Adrenal gland (tissue), 19 donors: ENCODE measurements at regions of chr7 and their contacts with region 1.

Region 1: GRCh38 chr7:120792091-120792860 is 65.7 kb downstream of the TSPAN12 start:
- DNase-seq: peak; percentile 71 to 88 (median 80)
- H3K4me3 ChIP-seq: no peak overlapping the region
- H3K27ac ChIP-seq: no peak overlapping the region
- H3K4me1 ChIP-seq: no peaks in the 10 kb centered on the region
- H3K27me3 ChIP-seq: no peaks in the 10 kb centered on the region
- CTCF ChIP-seq: peak; percentile 64 to 86 (median 74)
- POLR2A ChIP-seq: no peak

Region 2: GRCh38 chr7:120941064-120941463 is 148.8 kb after region 1 on chr7:
- intact Hi-C with region 1: loop called in 1 of 2 experiments (anchors 5 kb)
- DNase-seq: no peak
- H3K4me3 ChIP-seq: no peak overlapping the region
- H3K27ac ChIP-seq: no peak overlapping the region
- H3K4me1 ChIP-seq: peaks cover 0 to 8% of the 10 kb centered on the region in 2 donors
- H3K27me3 ChIP-seq: no peaks in the 10 kb centered on the region
- CTCF ChIP-seq: peak; percentile 4 to 59 (median 42)
- POLR2A ChIP-seq: no peak

Region 3: DNA sequence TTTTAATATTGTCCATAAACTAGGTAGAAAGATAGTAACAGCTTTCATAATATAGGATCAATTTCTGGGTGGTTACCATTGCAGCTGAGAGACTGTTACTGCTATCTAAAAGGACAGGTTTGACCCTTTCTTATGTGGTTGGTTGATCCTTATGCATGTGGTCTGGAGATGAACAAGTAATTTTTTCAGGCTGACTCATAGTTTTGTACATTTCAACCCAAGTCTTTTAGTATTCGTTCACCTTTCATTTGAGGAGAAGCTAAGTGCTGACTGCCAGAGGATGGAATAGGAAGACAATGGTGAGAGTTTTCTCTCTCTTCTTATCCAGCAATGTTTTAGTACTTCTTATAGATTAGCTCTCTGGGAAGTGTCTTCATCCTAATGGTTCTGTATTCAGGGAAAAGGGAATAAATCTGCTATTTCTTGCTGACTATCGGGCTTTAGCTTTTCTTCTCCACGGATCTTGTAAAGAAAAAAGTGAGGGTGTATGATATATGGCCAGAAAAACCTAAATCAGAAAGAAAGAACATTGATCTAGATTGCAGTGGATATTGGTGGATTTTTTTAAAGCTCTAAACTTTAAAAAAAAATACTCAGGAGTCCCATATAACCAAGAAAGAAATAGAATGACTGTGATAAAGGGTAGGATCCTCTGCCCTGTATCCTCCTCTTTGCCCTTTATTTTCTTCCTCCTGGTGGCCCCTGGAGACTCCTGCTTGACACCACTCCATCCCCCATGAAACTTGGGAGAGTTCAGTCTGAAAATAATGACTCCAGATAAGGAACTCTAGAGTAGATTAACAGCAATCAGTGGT is 284.3 kb after region 1 on chr7:
- intact Hi-C with region 1: no loop called
- DNase-seq: no peak
- H3K4me3 ChIP-seq: no peak overlapping the region
- H3K27ac ChIP-seq: no peak overlapping the region
- H3K4me1 ChIP-seq: peaks cover 3% of the 10 kb centered on the region in 2 donors
- H3K27me3 ChIP-seq: no peaks in the 10 kb centered on the region
- CTCF ChIP-seq: no peak
- POLR2A ChIP-seq: no peak

Region 4: DNA sequence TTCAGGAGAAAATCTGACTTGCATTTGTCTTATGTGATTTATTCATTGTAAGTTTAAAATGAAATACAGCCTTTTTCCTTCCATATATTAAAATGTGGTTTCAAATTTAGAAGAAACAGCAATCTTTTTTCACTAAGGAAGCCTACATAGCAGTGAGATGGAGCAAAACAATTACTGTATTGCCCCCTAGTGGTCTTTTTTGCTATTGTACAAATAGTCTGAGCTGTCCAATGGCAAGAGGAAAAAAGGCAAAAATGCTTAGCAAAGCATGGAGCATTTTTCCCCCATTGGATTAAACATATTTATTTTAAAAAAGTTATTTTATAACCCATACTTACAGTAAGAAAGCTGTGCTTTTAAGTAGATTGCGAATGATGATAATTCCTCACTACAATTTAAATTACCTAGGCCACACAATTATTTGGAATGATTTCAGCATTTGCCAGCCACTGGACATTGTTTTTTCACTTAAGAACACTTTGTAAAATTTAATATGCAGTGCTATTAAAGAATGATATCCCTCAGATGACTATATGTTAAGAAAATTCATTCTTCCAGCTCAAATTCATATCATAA is 315.7 kb after region 1 on chr7:
- intact Hi-C with region 1: loop called in 1 of 2 experiments (anchors 10 kb)
- DNase-seq: no peak
- H3K4me3 ChIP-seq: no peak overlapping the region
- H3K27ac ChIP-seq: no peak overlapping the region
- H3K4me1 ChIP-seq: no peaks in the 10 kb centered on the region
- H3K27me3 ChIP-seq: no peaks in the 10 kb centered on the region
- CTCF ChIP-seq: peak; percentile 59 to 88 (median 76)
- POLR2A ChIP-seq: no peak